ENCODE measurements at regions of chr14 and their contacts with region 1.

Region 1: DNA sequence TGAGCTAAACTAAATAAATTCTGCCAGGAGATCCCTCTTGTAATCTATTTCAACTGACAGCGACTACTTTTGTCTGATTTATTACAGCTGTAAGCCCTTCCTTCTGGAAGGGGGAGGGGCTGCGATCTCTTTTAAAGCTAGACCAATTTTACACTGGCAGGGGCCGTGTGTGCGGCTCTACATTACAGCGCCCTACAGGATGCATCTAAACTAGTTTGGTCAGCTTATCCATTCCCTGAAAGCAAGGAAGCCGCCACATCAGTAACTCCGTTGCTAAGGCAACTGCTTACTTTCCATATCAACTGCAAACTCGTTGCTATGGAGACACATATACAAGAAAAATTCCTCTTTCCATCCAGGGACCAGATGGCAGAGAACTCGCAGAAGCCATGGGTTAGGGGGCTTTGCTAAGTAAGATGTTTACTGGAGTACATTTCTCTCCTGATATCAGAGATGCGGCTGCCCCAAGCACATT is 17.4 kb downstream of the FOXN3 start:
- DNase-seq: no peak
- ATAC-seq: peak in 3 of 4 donors; percentile 58 to 63 (median 59)
- H3K4me3 ChIP-seq: peak overlapping the region in 6 of 12 donors; percentile 10 to 42 (median 14)
- H3K27ac ChIP-seq: peak overlapping the region in 4 of 12 donors; percentile 4 to 53 (median 10)
- H3K4me1 ChIP-seq: peaks cover 3 to 54% (median 32%) of the 10 kb centered on the region in 12 donors
- H3K27me3 ChIP-seq: no peaks in the 10 kb centered on the region
- CTCF ChIP-seq: no peak
- POLR2A ChIP-seq: no peak

Region 2: DNA sequence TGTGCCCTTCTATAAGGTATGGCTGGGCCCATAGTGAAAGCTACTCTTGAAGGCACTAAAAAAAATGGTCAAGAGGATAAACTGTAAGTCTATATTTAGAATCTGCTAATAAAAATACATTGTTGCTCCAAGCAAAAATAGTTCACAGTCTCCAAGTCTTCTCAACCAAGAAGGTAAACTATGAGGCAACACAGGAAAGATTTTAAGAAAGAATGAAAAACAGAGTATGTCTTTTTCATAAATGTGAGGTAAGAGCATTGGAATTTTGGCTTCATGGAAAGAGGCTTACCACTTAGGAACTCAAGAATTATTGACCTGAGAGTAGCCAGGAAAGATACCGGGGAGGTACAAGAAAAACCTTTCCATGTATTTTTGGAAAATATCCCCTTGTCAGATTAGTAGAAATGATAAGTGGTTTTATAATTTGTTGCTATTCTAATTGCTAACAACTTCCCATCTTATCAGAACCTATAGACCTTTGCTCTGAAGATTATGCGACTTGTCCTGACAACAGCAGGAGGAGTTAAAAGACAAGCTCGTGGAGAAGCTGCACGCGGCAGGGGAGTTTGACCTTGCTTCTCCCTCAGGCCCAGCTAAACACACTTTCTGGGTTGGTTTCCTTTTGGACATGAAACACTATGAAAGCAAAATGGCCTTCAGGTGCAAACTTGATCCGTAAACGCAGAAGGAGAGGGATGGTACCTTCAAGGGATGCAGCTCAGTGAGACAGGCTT is 220.7 kb before region 1 on chr14:
- intact Hi-C with region 1: loop called in 1 of 10 experiments (anchors 10 kb)
- DNase-seq: no peak
- ATAC-seq: no peak
- H3K4me3 ChIP-seq: no peak overlapping the region
- H3K27ac ChIP-seq: peak overlapping the region in 2 of 12 donors; percentile 19 to 38
- H3K4me1 ChIP-seq: peaks cover 0 to 43% (median 27%) of the 10 kb centered on the region in 12 donors
- H3K27me3 ChIP-seq: no peaks in the 10 kb centered on the region
- CTCF ChIP-seq: no peak
- POLR2A ChIP-seq: no peak

Region 3: DNA sequence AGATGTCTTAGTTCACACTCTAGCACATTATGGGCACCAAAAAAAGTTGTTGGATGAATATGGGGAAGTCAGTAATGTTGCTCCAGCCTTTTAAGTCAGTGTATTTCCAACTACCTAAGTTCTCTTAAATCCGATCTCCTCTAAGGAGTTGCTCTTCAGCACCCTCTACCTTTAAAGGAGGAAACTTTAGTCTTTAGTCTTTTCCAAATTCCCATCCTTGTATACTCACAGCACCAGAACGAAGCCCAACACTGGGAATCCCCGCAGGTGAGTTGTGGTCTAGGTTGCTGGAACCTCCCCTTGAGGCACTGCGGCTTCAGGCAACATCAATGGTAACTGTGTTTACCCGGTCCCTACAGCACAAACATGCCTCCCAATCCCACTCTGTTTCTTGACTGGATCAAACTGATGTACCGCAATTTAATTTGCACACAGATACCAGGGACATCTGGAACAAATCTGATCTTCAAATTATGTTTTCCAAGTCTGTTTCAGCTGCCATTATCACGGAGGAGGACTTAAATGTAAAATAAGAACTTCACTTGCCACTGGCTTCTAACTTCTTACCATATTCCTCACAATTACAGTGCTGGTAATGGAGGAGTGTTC is 161.6 kb before region 1 on chr14:
- intact Hi-C with region 1: loop called in 1 of 10 experiments (anchors 10 kb)
- DNase-seq: no peak
- ATAC-seq: peak in 1 of 4 donors; percentile 14
- H3K4me3 ChIP-seq: no peak overlapping the region
- H3K27ac ChIP-seq: no peak overlapping the region
- H3K4me1 ChIP-seq: peaks cover 2 to 53% (median 23%) of the 10 kb centered on the region in 12 donors
- H3K27me3 ChIP-seq: no peaks in the 10 kb centered on the region
- CTCF ChIP-seq: peak in 11 of 12 donors; percentile 7 to 53 (median 26)
- POLR2A ChIP-seq: no peak

Region 4: GRCh38 chr14:89296281-89296745 is 103.3 kb before region 1 on chr14:
- intact Hi-C with region 1: loop called in 1 of 10 experiments (anchors 10 kb)
- DNase-seq: no peak
- ATAC-seq: no peak
- H3K4me3 ChIP-seq: no peak overlapping the region
- H3K27ac ChIP-seq: no peak overlapping the region
- H3K4me1 ChIP-seq: peaks cover 0 to 41% (median 21%) of the 10 kb centered on the region in 12 donors
- H3K27me3 ChIP-seq: no peaks in the 10 kb centered on the region
- CTCF ChIP-seq: no peak
- POLR2A ChIP-seq: no peak

Region 5: GRCh38 chr14:89317051-89317691 is 82.5 kb before region 1 on chr14:
- intact Hi-C with region 1: loop called in 1 of 10 experiments (anchors 10 kb)
- DNase-seq: no peak
- ATAC-seq: no peak
- H3K4me3 ChIP-seq: no peak overlapping the region
- H3K27ac ChIP-seq: no peak overlapping the region
- H3K4me1 ChIP-seq: peaks cover 0 to 35% (median 4%) of the 10 kb centered on the region in 12 donors
- H3K27me3 ChIP-seq: no peaks in the 10 kb centered on the region
- CTCF ChIP-seq: no peak
- POLR2A ChIP-seq: no peak

Measured in heart left ventricle (tissue), 16 donors.